ENCODE measurements at regions of chr9 and their contacts with region 1.

Region 1: GRCh38 chr9:72022841-72023240 is 37.6 kb downstream of the C9orf57 start:
- DNase-seq: no peak
- ATAC-seq: peak; percentile 64
- H3K4me3 ChIP-seq: no peak overlapping the region
- H3K4me3 Mint-ChIP-seq: no peak overlapping the region
- H3K27ac ChIP-seq: no peak overlapping the region
- H3K27ac Mint-ChIP-seq: no peak overlapping the region
- H3K4me1 ChIP-seq: no peaks in the 10 kb centered on the region
- H3K4me1 Mint-ChIP-seq: no peaks in the 10 kb centered on the region
- H3K27me3 ChIP-seq: no peaks in the 10 kb centered on the region
- H3K27me3 Mint-ChIP-seq: no peaks in the 10 kb centered on the region

Region 2: GRCh38 chr9:70924895-70925547 is 1097.8 kb before region 1 on chr9:
- CTCF ChIA-PET with region 1: no interaction called
- POLR2A ChIA-PET with region 1: no interaction called
- intact Hi-C with region 1: loop called in 1 of 2 experiments (anchors 2 kb)
- DNase-seq: peak in 1 of 9 donors; percentile 13
- ATAC-seq: no peak
- H3K4me3 ChIP-seq: no peak overlapping the region
- H3K4me3 Mint-ChIP-seq: no peak overlapping the region
- H3K27ac ChIP-seq: no peak overlapping the region
- H3K27ac Mint-ChIP-seq: no peak overlapping the region
- H3K4me1 ChIP-seq: no peaks in the 10 kb centered on the region
- H3K4me1 Mint-ChIP-seq: no peaks in the 10 kb centered on the region
- H3K27me3 ChIP-seq: no peaks in the 10 kb centered on the region
- H3K27me3 Mint-ChIP-seq: peaks cover 0 to 6% (median 0%) of the 10 kb centered on the region in 5 donors

Region 3: GRCh38 chr9:71285191-71285656 is 737.6 kb before region 1 on chr9:
- CTCF ChIA-PET with region 1: interaction called, 12 read pairs
- POLR2A ChIA-PET with region 1: no interaction called
- intact Hi-C with region 1: loop called (anchors 1 to 2 kb)
- DNase-seq: peak in 6 of 9 donors; percentile 10 to 42 (median 36)
- ATAC-seq: peak; percentile 79
- H3K4me3 ChIP-seq: no peak overlapping the region
- H3K4me3 Mint-ChIP-seq: no peak overlapping the region
- H3K27ac ChIP-seq: no peak overlapping the region
- H3K27ac Mint-ChIP-seq: no peak overlapping the region
- H3K4me1 ChIP-seq: no peaks in the 10 kb centered on the region
- H3K4me1 Mint-ChIP-seq: peaks cover 0 to 3% (median 0%) of the 10 kb centered on the region in 7 donors
- H3K27me3 ChIP-seq: no peaks in the 10 kb centered on the region
- H3K27me3 Mint-ChIP-seq: peaks cover 2 to 9% (median 6%) of the 10 kb centered on the region in 5 donors

Region 4: GRCh38 chr9:71628247-71628646 is 394.6 kb before region 1 on chr9:
- CTCF ChIA-PET with region 1: no interaction called
- POLR2A ChIA-PET with region 1: no interaction called
- intact Hi-C with region 1: loop called in 1 of 2 experiments (anchors 1 kb)
- DNase-seq: peak in 1 of 9 donors; percentile 29
- ATAC-seq: peak; percentile 57
- H3K4me3 ChIP-seq: no peak overlapping the region
- H3K4me3 Mint-ChIP-seq: no peak overlapping the region
- H3K27ac ChIP-seq: no peak overlapping the region
- H3K27ac Mint-ChIP-seq: no peak overlapping the region
- H3K4me1 ChIP-seq: no peaks in the 10 kb centered on the region
- H3K4me1 Mint-ChIP-seq: peaks cover 0 to 33% (median 0%) of the 10 kb centered on the region in 7 donors
- H3K27me3 ChIP-seq: no peaks in the 10 kb centered on the region
- H3K27me3 Mint-ChIP-seq: peaks cover 0 to 27% (median 0%) of the 10 kb centered on the region in 5 donors

Region 5: GRCh38 chr9:71806901-71807307 is 215.9 kb before region 1 on chr9:
- CTCF ChIA-PET with region 1: interaction called, 7 read pairs
- POLR2A ChIA-PET with region 1: interaction called, 3 read pairs
- intact Hi-C with region 1: loop called (anchors 1 kb)
- DNase-seq: peak in 8 of 9 donors; percentile 20 to 65 (median 50)
- ATAC-seq: peak; percentile 98
- H3K4me3 ChIP-seq: no peak overlapping the region
- H3K4me3 Mint-ChIP-seq: no peak overlapping the region
- H3K27ac ChIP-seq: no peak overlapping the region
- H3K27ac Mint-ChIP-seq: peak overlapping the region in 7 of 9 donors; percentile 19 to 85 (median 65)
- H3K4me1 ChIP-seq: peaks cover 0 to 7% of the 10 kb centered on the region in 2 donors
- H3K4me1 Mint-ChIP-seq: peaks cover 0 to 21% (median 10%) of the 10 kb centered on the region in 7 donors
- H3K27me3 ChIP-seq: no peaks in the 10 kb centered on the region
- H3K27me3 Mint-ChIP-seq: peaks cover 0 to 3% (median 0%) of the 10 kb centered on the region in 5 donors

Region 6: DNA sequence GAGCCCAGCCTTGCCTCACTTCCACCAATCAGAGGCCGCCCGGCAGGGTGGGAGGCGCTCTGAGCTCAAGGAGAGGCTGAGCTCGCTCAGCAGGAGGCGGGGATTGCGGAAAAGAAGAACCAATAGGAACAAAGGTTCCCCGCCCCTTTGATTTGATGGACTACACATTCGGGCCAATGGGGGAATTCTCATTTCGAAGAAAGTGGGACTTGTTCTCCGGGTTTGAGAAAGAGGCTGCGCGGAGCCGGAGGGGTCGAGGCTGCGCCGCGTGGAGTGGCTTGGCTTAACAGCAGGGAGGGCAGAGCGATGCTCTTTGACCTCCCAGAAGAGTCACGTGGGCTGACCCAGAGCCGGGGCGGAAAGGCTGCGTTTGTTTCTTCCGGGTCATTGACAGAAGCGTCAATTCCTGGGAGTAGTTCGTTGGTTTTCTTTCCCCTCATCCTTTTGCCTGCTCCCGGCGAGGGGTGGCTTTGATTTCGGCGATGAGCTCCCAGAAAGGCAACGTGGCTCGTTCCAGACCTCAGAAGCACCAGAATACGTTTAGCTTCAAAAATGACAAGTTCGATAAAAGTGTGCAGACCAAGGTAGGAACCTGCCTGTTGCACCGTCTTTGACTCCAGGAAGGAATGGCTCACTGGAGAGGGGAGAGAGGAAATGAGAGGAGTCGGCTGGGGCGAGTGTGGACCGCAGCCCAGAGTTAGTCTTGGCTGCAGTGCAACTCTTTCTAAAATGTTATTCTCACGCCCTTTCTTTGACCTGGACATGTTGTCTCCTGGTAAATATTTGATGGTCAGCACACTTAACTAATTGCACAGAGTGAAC is 111.4 kb before region 1 on chr9 and contains the start of gene C9orf85:
- CTCF ChIA-PET with region 1: no interaction called
- POLR2A ChIA-PET with region 1: no interaction called
- intact Hi-C with region 1: loop called in 1 of 2 experiments (anchors 10 kb)
- DNase-seq: peak; percentile 84 to 98 (median 95)
- ATAC-seq: peak; percentile 96
- H3K4me3 ChIP-seq: peak within 1 kb of the TSS; percentile 83
- H3K4me3 Mint-ChIP-seq: peak within 1 kb of the TSS; percentile 95 to 100 (median 100)
- H3K27ac ChIP-seq: peak within 1 kb of the TSS; percentile 74
- H3K27ac Mint-ChIP-seq: peak within 1 kb of the TSS; percentile 90 to 99 (median 95)
- H3K4me1 ChIP-seq: peaks cover 15 to 22% of the 10 kb centered on the region in 2 donors
- H3K4me1 Mint-ChIP-seq: peaks cover 47 to 80% (median 67%) of the 10 kb centered on the region in 7 donors
- H3K27me3 ChIP-seq: peaks cover 0 to 3% of the 10 kb centered on the region in 2 donors
- H3K27me3 Mint-ChIP-seq: no peaks in the 10 kb centered on the region
- total RNA-seq, gene C9orf85: 4.8 to 10.3 (median 8.6) TPM

Region 7: DNA sequence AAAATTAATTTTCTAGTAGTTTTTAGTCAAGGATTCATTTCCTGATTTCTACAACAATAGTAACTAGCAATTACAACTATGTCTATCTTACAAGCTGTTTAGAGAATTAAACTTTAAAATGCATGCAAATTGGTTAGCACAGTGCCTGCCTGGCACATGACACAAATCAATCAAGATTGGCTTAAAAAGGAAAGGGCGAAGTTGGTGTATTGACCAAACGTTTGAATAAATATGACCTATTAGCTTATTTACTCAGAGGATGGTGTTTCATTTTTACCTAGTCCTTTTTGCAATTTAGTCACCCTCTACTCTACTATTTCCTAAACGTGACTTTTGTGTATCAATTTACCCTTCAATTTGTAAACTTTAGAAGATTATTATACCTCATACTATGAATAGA is 209.9 kb after region 1 on chr9:
- CTCF ChIA-PET with region 1: no interaction called
- POLR2A ChIA-PET with region 1: no interaction called
- intact Hi-C with region 1: no loop called
- DNase-seq: no peak
- ATAC-seq: no peak
- H3K4me3 ChIP-seq: no peak overlapping the region
- H3K4me3 Mint-ChIP-seq: no peak overlapping the region
- H3K27ac ChIP-seq: no peak overlapping the region
- H3K27ac Mint-ChIP-seq: no peak overlapping the region
- H3K4me1 ChIP-seq: no peaks in the 10 kb centered on the region
- H3K4me1 Mint-ChIP-seq: peaks cover 0 to 5% (median 0%) of the 10 kb centered on the region in 7 donors
- H3K27me3 ChIP-seq: no peaks in the 10 kb centered on the region
- H3K27me3 Mint-ChIP-seq: peaks cover 0 to 5% (median 2%) of the 10 kb centered on the region in 5 donors